ENCODE measurements at regions of chr7 and their contacts with region 1.

Region 1: DNA sequence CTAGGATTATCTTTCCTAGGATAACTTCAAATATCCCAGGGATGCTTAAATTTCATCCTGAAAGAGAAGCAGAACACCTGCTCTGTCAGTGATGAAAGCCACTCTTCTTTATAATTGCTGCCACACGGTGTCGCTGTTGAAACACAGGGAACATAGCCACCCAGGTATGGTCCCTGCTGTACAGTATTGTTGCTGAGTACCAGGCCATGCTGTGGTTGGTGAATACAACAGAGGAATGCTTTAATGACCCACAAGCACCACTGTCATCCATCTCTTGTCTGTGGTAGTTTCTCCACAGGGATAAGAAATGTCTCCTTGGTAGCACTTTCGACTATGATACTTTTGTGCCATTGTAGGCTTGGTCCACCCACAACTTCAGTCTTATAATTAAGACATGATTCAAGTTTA is 70.6 kb upstream of the STARD3NL start:
- DNase-seq: peak; percentile 16 to 58 (median 44)
- ATAC-seq: peak; percentile 88
- H3K4me3 ChIP-seq: no peak overlapping the region
- H3K4me3 Mint-ChIP-seq: no peak overlapping the region
- H3K27ac ChIP-seq: no peak overlapping the region
- H3K27ac Mint-ChIP-seq: no peak overlapping the region
- H3K4me1 ChIP-seq: no peaks in the 10 kb centered on the region
- H3K4me1 Mint-ChIP-seq: peaks cover 0 to 2% (median 0%) of the 10 kb centered on the region in 7 donors
- H3K27me3 ChIP-seq: no peaks in the 10 kb centered on the region
- H3K27me3 Mint-ChIP-seq: peaks cover 18 to 43% (median 23%) of the 10 kb centered on the region in 5 donors

Region 2: GRCh38 chr7:38186593-38187314 is 79.3 kb after region 1 on chr7:
- CTCF ChIA-PET with region 1: no interaction called
- POLR2A ChIA-PET with region 1: no interaction called
- intact Hi-C with region 1: no loop called
- DNase-seq: no peak
- ATAC-seq: no peak
- H3K4me3 ChIP-seq: no peak overlapping the region
- H3K4me3 Mint-ChIP-seq: no peak overlapping the region
- H3K27ac ChIP-seq: no peak overlapping the region
- H3K27ac Mint-ChIP-seq: no peak overlapping the region
- H3K4me1 ChIP-seq: no peaks in the 10 kb centered on the region
- H3K4me1 Mint-ChIP-seq: peaks cover 24 to 56% (median 43%) of the 10 kb centered on the region in 7 donors
- H3K27me3 ChIP-seq: no peaks in the 10 kb centered on the region
- H3K27me3 Mint-ChIP-seq: no peaks in the 10 kb centered on the region

Region 3: DNA sequence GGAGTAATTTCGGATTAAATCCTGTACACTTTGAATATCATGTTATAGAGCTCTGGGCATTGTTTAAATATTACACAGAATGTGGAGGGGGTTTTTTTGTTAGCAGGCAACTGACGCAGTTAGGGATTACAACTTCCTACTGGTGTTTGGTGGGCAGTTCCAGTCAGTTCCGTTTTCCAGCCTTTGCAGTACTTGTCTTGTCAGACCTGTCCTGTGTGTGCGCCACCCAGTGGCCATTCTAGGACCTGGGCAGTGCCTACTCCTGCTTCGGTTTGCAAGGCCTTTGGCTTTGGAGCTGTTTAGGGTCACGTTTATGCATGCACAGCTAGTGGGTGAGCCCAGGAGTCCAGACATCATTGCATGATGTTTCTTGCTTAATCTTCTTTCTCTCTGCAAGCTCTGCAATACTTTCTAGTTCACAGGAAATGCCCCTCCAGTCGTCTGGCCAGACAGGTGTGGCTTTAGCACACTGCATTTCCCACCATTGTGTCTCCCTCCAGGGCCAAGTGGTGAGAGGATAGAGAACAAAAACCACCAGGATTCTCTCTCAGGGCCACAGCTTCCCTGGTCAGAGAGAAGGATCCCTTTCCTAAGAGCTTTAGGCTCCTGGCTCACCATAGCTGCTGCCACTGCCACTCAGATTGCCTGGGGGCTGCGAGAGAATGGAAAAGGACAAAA is 262.5 kb after region 1 on chr7:
- CTCF ChIA-PET with region 1: interaction called, 53 read pairs
- POLR2A ChIA-PET with region 1: interaction called, 3 read pairs
- intact Hi-C with region 1: loop called (anchors 1 kb)
- DNase-seq: peak; percentile 39 to 79 (median 63)
- ATAC-seq: peak; percentile 89
- H3K4me3 ChIP-seq: no peak overlapping the region
- H3K4me3 Mint-ChIP-seq: peak overlapping the region; percentile 9 to 64 (median 56)
- H3K27ac ChIP-seq: peak overlapping the region; percentile 64
- H3K27ac Mint-ChIP-seq: peak overlapping the region in 8 of 9 donors; percentile 85 to 97 (median 92)
- H3K4me1 ChIP-seq: peaks cover 47% of the 10 kb centered on the region in 2 donors
- H3K4me1 Mint-ChIP-seq: peaks cover 33 to 79% (median 69%) of the 10 kb centered on the region in 7 donors
- H3K27me3 ChIP-seq: no peaks in the 10 kb centered on the region
- H3K27me3 Mint-ChIP-seq: no peaks in the 10 kb centered on the region

Region 4: GRCh38 chr7:38660427-38661099 is 553.1 kb after region 1 on chr7:
- CTCF ChIA-PET with region 1: no interaction called
- POLR2A ChIA-PET with region 1: no interaction called
- intact Hi-C with region 1: loop called (anchors 2 to 10 kb)
- DNase-seq: peak in 7 of 9 donors; percentile 7 to 51 (median 30)
- ATAC-seq: peak; percentile 78
- H3K4me3 ChIP-seq: no peak overlapping the region
- H3K4me3 Mint-ChIP-seq: no peak overlapping the region
- H3K27ac ChIP-seq: no peak overlapping the region
- H3K27ac Mint-ChIP-seq: no peak overlapping the region
- H3K4me1 ChIP-seq: no peaks in the 10 kb centered on the region
- H3K4me1 Mint-ChIP-seq: no peaks in the 10 kb centered on the region
- H3K27me3 ChIP-seq: no peaks in the 10 kb centered on the region
- H3K27me3 Mint-ChIP-seq: peaks cover 20 to 31% (median 27%) of the 10 kb centered on the region in 5 donors

Measured in naive thymus-derived CD4-positive, alpha-beta T cell (primary cell).